CD14-positive monocyte (primary cell): ENCODE measurements at regions of chr15 and their contacts with region 1.

Region 1: GRCh38 chr15:89243691-89244471 is at the start of gene FANCI:
- DNase-seq: peak; percentile 83 to 87 (median 85)
- H3K4me3 ChIP-seq: peak within 1 kb of the TSS; percentile 66 to 87 (median 77)
- H3K4me3 Mint-ChIP-seq: peak within 1 kb of the TSS; percentile 90 to 96
- H3K27ac ChIP-seq: peak within 1 kb of the TSS; percentile 4 to 69
- H3K27ac Mint-ChIP-seq: peak within 1 kb of the TSS; percentile 76 to 97 (median 90)
- H3K4me1 ChIP-seq: peaks cover 17 to 18% of the 10 kb centered on the region in 2 donors
- H3K4me1 Mint-ChIP-seq: peaks cover 46% of the 10 kb centered on the region
- H3K27me3 ChIP-seq: no peaks in the 10 kb centered on the region
- H3K27me3 Mint-ChIP-seq: peaks cover 0 to 6% (median 2%) of the 10 kb centered on the region in 3 donors
- CTCF ChIP-seq: no peak
- polyA plus RNA-seq, gene FANCI: 1.4 to 2.6 (median 1.5) TPM

Region 2: DNA sequence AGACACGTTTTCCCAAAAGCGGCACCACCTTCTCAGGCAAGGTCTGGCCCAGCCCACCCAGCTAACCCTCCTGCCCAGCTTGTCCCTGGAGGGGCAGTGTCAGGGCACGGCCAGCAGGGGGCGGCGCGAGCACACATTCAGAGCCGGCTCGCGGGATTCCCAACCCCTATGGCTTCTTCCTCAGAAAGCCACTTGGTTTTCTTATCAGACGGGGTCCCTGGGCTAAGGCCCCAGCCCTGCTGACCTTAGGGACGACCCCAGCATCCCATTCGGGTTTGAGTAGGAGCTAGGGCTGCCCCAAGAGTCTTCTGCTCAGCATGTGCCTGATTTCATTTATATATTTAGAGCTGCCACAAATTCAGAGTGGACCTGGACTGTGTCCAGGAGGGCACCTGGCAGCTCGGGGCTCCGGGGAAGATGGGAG is 37.0 kb before region 1 on chr15:
- intact Hi-C with region 1: loop called in 1 of 2 experiments (anchors 5 kb)
- DNase-seq: peak; percentile 34 to 70 (median 56)
- H3K4me3 ChIP-seq: no peak overlapping the region
- H3K4me3 Mint-ChIP-seq: no peak overlapping the region
- H3K27ac ChIP-seq: no peak overlapping the region
- H3K27ac Mint-ChIP-seq: no peak overlapping the region
- H3K4me1 ChIP-seq: peaks cover 3% of the 10 kb centered on the region in 2 donors
- H3K4me1 Mint-ChIP-seq: peaks cover 6% of the 10 kb centered on the region
- H3K27me3 ChIP-seq: no peaks in the 10 kb centered on the region
- H3K27me3 Mint-ChIP-seq: peaks cover 0 to 9% (median 2%) of the 10 kb centered on the region in 3 donors
- CTCF ChIP-seq: peak; percentile 99

Region 3: DNA sequence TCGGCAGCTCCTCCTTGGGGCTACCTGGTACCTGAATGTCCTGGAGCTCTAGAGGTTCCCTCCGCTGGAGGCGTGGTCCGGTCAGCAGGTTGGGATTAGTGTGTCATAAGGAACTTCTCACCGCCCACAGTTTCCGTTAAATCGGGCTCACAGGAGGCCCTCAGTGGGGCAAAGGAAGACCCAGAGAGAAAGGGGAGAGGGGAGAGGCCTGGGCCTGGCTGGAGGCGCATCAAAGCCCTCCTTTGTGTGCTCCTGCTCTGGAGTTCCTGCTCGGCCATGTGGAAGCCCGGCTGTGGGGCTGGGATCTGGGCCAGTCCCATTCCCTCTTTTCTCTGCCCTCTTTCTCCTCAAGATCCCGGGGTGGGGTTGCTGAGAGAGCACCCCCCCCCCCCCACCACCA is 22.3 kb before region 1 on chr15 and contains the start of gene RLBP1:
- intact Hi-C with region 1: no loop called
- DNase-seq: no peak
- H3K4me3 ChIP-seq: no peak within 1 kb of the TSS
- H3K4me3 Mint-ChIP-seq: no peak within 1 kb of the TSS
- H3K27ac ChIP-seq: no peak within 1 kb of the TSS
- H3K27ac Mint-ChIP-seq: no peak within 1 kb of the TSS
- H3K4me1 ChIP-seq: no peaks in the 10 kb centered on the region
- H3K4me1 Mint-ChIP-seq: no peaks in the 10 kb centered on the region
- H3K27me3 ChIP-seq: no peaks in the 10 kb centered on the region
- H3K27me3 Mint-ChIP-seq: peaks cover 2 to 6% (median 6%) of the 10 kb centered on the region in 3 donors
- CTCF ChIP-seq: no peak
- polyA plus RNA-seq, gene RLBP1: not detected

Region 4: DNA sequence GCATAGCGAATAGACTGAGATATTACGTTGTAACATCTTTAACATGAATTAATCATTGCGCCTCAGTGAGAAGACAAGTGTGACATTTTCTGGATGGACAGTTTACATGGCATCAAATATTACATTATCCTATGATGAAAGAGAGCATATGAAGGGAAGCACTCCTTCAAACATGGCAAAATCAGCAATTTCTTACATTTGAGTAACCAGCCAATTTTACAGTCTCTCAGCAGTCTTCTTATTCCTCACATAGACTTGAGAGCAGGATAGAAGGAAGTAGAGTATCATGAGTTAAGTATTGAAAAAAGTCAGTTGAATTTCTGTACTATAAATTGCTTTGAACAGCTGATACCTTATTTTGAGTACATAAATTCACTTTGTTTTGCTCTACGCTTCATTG is 38.8 kb after region 1 on chr15:
- intact Hi-C with region 1: no loop called
- DNase-seq: no peak
- H3K4me3 ChIP-seq: no peak overlapping the region
- H3K4me3 Mint-ChIP-seq: no peak overlapping the region
- H3K27ac ChIP-seq: no peak overlapping the region
- H3K27ac Mint-ChIP-seq: no peak overlapping the region
- H3K4me1 ChIP-seq: no peaks in the 10 kb centered on the region
- H3K4me1 Mint-ChIP-seq: no peaks in the 10 kb centered on the region
- H3K27me3 ChIP-seq: no peaks in the 10 kb centered on the region
- H3K27me3 Mint-ChIP-seq: no peaks in the 10 kb centered on the region
- CTCF ChIP-seq: no peak